ENCODE measurements at regions of chr7 and their contacts with region 1.

Region 1: GRCh38 chr7:18086165-18087030 is 58.8 kb upstream of the PRPS1L1 start:
- DNase-seq: peak; percentile 47 to 74 (median 61)
- ATAC-seq: peak; percentile 71 to 76
- H3K4me3 ChIP-seq: peak overlapping the region; percentile 97
- H3K27ac ChIP-seq: peak overlapping the region; percentile 27
- H3K4me1 ChIP-seq: no peaks in the 10 kb centered on the region
- H3K27me3 ChIP-seq: no peaks in the 10 kb centered on the region

Region 2: GRCh38 chr7:17307000-17307399 is 779.4 kb before region 1 on chr7:
- intact Hi-C with region 1: no loop called
- DNase-seq: no peak
- ATAC-seq: peak; percentile 70 to 83
- H3K4me3 ChIP-seq: peak overlapping the region; percentile 16
- H3K27ac ChIP-seq: no peak overlapping the region
- H3K4me1 ChIP-seq: peaks cover 7% of the 10 kb centered on the region
- H3K27me3 ChIP-seq: no peaks in the 10 kb centered on the region

Region 3: DNA sequence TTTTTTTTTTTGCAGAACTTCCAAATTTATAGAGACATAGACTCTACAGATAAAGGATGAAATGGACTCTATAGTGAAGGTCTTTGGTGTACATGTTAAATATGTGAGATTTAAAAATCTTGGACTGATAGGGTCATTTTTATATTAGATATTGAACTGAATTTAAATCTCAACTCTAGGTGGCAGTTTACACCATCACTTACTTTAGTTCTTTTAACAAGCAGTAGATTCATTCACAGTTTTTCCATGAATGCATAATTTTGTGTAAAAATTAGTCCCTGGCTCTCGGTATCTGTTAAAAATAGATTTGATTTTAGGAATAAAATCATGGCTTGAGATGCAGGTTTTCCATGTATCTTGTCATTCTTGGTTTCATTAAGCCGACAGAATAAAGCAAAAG is 115.0 kb before region 1 on chr7:
- intact Hi-C with region 1: no loop called
- DNase-seq: no peak
- ATAC-seq: no peak
- H3K4me3 ChIP-seq: no peak overlapping the region
- H3K27ac ChIP-seq: no peak overlapping the region
- H3K4me1 ChIP-seq: no peaks in the 10 kb centered on the region
- H3K27me3 ChIP-seq: no peaks in the 10 kb centered on the region

Region 4: DNA sequence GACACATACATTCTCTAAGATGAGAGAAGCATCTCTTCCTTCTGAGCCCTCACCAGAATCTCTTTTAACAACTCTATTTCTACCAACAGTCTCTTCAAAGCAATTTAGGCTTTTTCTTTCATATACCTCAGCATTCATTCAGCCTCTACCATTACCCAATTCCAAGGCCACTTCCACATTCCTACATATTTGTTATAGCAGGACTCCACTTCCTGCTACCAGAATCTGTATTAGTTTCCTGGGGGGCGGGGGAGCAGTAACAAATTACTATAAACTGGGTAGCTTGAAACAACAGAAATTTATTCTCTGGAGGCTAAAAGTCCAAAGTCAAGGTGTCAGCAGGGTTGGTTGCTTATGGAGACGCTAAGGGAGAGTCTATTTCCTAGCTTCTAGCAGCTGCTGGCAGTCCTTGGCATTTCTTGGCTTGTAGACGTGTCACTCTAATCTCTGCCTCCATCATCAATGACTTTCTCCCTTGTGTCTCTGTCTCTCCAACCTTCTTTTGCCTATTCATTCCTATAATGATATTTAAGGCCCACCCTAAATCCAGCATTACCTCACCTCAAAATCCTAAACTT is 66.2 kb before region 1 on chr7:
- intact Hi-C with region 1: loop called in 1 of 4 experiments (anchors 10 kb)
- DNase-seq: no peak
- ATAC-seq: peak in 1 of 2 donors; percentile 43
- H3K4me3 ChIP-seq: no peak overlapping the region
- H3K27ac ChIP-seq: peak overlapping the region; percentile 37
- H3K4me1 ChIP-seq: no peaks in the 10 kb centered on the region
- H3K27me3 ChIP-seq: no peaks in the 10 kb centered on the region

Region 5: GRCh38 chr7:18552943-18553584 is 466.7 kb after region 1 on chr7:
- intact Hi-C with region 1: no loop called
- DNase-seq: peak in 1 of 3 donors; percentile 39
- ATAC-seq: peak; percentile 65 to 95
- H3K4me3 ChIP-seq: no peak overlapping the region
- H3K27ac ChIP-seq: no peak overlapping the region
- H3K4me1 ChIP-seq: no peaks in the 10 kb centered on the region
- H3K27me3 ChIP-seq: no peaks in the 10 kb centered on the region

Measured in right cardiac atrium (tissue), 5 donors.